ENCODE measurements at regions of chr22 and their contacts with region 1.

Region 1: DNA sequence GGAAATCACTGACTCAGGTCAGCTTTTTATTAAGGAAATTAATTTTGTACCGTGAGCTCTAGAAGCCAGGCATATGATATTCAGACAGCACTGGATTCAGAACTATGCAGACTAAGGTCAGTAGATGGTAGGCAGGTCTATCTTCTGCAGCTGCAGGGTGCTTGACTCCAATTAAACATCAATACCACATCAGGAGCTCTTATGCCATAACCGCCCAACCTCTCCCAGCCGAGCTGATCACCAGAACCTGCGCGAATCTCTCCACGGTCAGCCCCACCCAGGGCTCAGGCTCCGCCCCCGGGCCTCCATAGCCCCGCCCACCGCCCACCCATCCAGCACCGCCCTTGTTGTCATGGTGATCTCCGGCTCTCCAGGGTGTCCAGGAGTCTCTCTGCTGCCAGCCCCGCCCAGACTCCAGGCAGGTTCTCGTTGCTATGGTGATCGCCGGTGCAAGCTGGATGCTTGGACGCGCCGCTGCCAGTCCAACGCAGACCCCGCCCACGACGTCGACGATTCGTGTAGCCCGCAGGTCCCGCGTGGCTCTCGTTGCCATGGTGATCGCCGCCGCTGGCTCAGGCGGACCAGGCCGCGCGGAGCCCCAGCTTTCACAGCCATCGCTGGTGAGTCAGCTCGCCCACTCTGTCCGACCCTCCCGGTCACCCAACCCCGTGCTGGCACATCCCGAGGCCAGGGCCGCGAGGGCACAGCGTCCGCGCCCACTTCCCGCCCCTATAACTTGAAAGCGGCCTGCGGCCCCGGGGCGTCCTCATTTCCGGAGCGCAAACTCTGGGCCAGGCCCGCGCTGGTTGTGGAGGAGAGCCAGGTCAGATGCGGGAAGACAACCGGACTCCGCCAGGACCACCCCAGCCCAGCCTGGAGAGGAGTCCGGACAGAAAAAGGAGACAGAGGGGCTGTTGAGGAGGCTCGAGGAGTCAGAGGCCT is at the start of gene RAB36:
- DNase-seq: peak; percentile 89
- CTCF ChIP-seq: no peak

Region 2: GRCh38 chr22:22207845-22208564 is 937.2 kb before region 1 on chr22:
- in situ Hi-C with region 1: loop called (anchors 25 kb)
- DNase-seq: peak; percentile 92
- CTCF ChIP-seq: peak; percentile 93

Region 3: GRCh38 chr22:22357024-22357883 is 787.9 kb before region 1 on chr22:
- in situ Hi-C with region 1: loop called (anchors 25 kb)
- DNase-seq: peak; percentile 92
- CTCF ChIP-seq: peak; percentile 63